ENCODE measurements at regions of chr10 and their contacts with region 1.

Region 1: GRCh38 chr10:69087590-69088470 is at the start of gene SRGN:
- DNase-seq: peak; percentile 75 to 94
- ATAC-seq: peak; percentile 41 to 71 (median 61)
- H3K4me3 ChIP-seq: peak within 1 kb of the TSS; percentile 53
- H3K4me3 Mint-ChIP-seq: peak within 1 kb of the TSS; percentile 89
- H3K27ac ChIP-seq: peak within 1 kb of the TSS; percentile 100
- H3K27ac Mint-ChIP-seq: peak within 1 kb of the TSS; percentile 96
- H3K4me1 ChIP-seq: peaks cover 38% of the 10 kb centered on the region
- H3K4me1 Mint-ChIP-seq: peaks cover 57 to 65% of the 10 kb centered on the region in 2 donors
- H3K27me3 ChIP-seq: no peaks in the 10 kb centered on the region
- H3K27me3 Mint-ChIP-seq: no peaks in the 10 kb centered on the region
- CTCF ChIP-seq: no peak
- total RNA-seq, gene SRGN: 636 to 954 (median 778) TPM

Region 2: DNA sequence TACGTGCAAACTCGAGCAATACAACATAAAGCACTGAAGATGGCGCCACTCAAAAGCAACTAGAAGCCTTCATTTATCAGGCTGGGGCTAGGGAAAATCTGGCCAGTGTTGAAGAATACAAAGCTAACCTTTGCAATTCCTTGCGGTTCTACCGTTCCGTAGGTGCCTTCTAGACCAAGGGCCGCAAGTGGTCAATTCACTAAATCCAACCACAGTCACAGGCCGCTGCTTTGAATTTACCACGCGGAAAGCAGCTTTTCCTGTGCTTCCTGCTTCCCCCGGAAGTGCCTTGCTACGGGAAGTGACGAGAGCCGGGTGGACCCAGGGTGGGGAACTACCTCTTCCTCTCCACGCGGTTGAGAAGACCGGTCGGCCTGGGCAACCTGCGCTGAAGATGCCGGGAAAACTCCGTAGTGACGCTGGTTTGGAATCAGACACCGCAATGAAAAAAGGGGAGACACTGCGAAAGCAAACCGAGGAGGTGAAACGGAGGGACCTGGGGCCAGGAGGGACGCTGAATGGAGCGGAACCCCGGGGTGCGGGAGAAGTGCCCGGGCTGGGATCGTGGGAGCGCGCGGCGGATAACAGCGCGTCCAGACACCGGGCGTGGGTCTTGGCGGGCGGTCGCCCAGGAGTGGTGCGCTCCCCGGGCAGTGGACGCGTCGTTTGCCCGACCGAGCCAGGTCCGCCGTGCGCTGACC is 131.8 kb before region 1 on chr10 and contains the start of gene DDX21:
- intact Hi-C with region 1: loop called (anchors 2 kb)
- DNase-seq: peak; percentile 81 to 94
- ATAC-seq: peak; percentile 84 to 93 (median 87)
- H3K4me3 ChIP-seq: peak within 1 kb of the TSS; percentile 72
- H3K4me3 Mint-ChIP-seq: peak within 1 kb of the TSS; percentile 99
- H3K27ac ChIP-seq: peak within 1 kb of the TSS; percentile 86
- H3K27ac Mint-ChIP-seq: peak within 1 kb of the TSS; percentile 99
- H3K4me1 ChIP-seq: peaks cover 25% of the 10 kb centered on the region
- H3K4me1 Mint-ChIP-seq: peaks cover 31 to 38% of the 10 kb centered on the region in 2 donors
- H3K27me3 ChIP-seq: no peaks in the 10 kb centered on the region
- H3K27me3 Mint-ChIP-seq: no peaks in the 10 kb centered on the region
- CTCF ChIP-seq: peak; percentile 77
- total RNA-seq, gene DDX21: 59.0 to 62.1 (median 59.8) TPM

Region 3: DNA sequence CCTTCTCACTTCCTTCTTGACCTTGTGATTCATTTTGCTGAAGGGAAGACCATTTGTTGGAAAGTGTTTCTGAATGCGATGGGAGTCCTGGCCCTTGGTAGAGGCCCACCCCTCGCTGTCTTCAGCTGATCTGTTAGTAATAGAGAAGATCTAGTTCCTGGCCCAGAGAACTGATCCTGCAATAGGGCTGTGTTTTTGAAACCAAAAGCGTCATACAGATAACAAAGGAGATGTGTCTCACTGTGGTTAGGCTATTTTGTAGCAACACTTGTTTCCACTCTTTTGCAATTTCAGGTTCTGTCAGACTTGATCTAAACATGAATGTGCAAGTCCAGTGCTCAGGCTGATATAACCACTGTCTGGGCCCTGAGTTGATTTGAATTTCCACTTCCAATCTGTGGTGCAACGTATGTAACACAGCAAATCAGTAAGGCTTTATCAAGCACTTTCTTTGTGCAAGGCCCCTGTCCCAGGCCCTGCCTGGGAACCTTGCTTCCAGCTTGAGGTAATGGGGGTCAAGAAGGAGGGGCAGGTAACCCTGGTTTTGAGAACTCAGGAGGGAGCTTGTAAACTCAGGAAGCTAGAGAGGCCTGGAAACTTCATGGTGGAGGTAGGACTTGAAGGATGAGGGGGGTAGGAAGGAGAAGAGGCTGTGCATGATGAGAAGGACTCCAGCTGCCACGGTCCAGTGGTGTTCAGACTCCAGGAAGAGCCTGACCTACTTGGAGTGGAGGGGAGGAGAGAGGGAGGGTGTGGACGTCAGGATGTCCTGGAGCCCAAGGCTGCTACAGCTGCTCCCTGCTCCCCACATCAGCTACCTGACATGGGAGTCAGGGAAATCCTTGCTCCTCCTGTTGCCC is 42.2 kb before region 1 on chr10:
- intact Hi-C with region 1: loop called (anchors 1 kb)
- DNase-seq: peak; percentile 37 to 70
- ATAC-seq: peak; percentile 70 to 89 (median 84)
- H3K4me3 ChIP-seq: no peak overlapping the region
- H3K4me3 Mint-ChIP-seq: peak overlapping the region; percentile 87
- H3K27ac ChIP-seq: peak overlapping the region; percentile 88
- H3K27ac Mint-ChIP-seq: peak overlapping the region; percentile 95 to 99
- H3K4me1 ChIP-seq: peaks cover 66% of the 10 kb centered on the region
- H3K4me1 Mint-ChIP-seq: peaks cover 52 to 63% of the 10 kb centered on the region in 2 donors
- H3K27me3 ChIP-seq: no peaks in the 10 kb centered on the region
- H3K27me3 Mint-ChIP-seq: no peaks in the 10 kb centered on the region
- CTCF ChIP-seq: no peak

Region 4: DNA sequence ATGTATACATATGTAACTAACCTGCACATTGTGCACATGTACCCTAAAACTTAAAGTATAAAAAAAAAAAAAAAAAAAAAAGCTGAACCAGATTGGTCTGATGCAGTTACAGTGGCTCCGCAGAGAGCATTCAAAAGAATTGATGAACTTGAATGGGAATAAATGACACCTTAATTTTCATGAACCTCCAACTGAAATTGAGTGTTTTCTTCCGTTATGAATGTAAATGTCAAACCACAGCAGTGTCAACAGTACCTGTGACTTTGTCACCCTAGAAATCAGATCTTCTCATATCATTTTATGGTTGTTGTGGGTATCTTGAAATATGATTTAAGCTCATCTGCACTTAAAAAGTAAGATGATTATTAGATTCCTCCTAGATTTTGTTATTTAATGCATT is 32.6 kb before region 1 on chr10:
- intact Hi-C with region 1: loop called (anchors 1 kb)
- DNase-seq: peak in 1 of 2 donors; percentile 40
- ATAC-seq: peak; percentile 39 to 49 (median 40)
- H3K4me3 ChIP-seq: no peak overlapping the region
- H3K4me3 Mint-ChIP-seq: peak overlapping the region; percentile 78
- H3K27ac ChIP-seq: peak overlapping the region; percentile 72
- H3K27ac Mint-ChIP-seq: peak overlapping the region; percentile 85 to 93
- H3K4me1 ChIP-seq: peaks cover 78% of the 10 kb centered on the region
- H3K4me1 Mint-ChIP-seq: peaks cover 49 to 61% of the 10 kb centered on the region in 2 donors
- H3K27me3 ChIP-seq: no peaks in the 10 kb centered on the region
- H3K27me3 Mint-ChIP-seq: no peaks in the 10 kb centered on the region
- CTCF ChIP-seq: no peak

Region 5: GRCh38 chr10:69069090-69070042 is 18.5 kb before region 1 on chr10:
- intact Hi-C with region 1: no loop called
- DNase-seq: no peak
- ATAC-seq: no peak
- H3K4me3 ChIP-seq: no peak overlapping the region
- H3K4me3 Mint-ChIP-seq: no peak overlapping the region
- H3K27ac ChIP-seq: no peak overlapping the region
- H3K27ac Mint-ChIP-seq: no peak overlapping the region
- H3K4me1 ChIP-seq: peaks cover 29% of the 10 kb centered on the region
- H3K4me1 Mint-ChIP-seq: peaks cover 15 to 24% of the 10 kb centered on the region in 2 donors
- H3K27me3 ChIP-seq: no peaks in the 10 kb centered on the region
- H3K27me3 Mint-ChIP-seq: no peaks in the 10 kb centered on the region
- CTCF ChIP-seq: no peak

Region 6: DNA sequence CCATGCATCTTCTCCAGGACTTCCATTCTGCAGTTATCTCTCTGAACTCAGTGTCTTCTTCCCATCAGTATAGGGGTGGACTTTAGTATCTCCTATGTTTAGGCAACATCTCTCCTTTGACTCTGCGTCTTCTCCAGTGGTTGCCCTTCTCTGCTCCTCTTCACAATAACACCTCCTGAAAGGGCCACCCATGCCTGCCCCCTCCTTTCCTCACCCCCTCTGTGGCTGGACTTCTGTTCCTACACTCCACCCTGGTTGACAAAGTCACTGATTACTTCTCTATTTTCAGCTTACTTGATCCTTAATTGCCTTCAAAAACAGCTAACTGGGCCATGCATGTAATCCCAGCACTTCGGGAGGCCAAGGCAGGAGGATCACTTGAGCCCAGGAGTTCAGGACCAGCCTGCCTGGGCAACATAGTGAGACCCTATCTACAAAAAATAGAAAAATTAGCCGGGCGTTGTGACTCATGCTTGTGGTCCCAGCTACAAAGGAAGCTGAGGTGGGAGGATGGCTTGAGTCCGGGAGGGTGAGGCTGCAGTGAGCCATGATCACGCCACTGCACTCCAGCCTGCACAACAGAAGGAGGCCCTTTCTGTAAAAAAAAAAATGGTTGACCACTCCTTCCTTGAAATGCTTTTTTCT is 13.7 kb after region 1 on chr10:
- intact Hi-C with region 1: loop called (anchors 1 kb)
- DNase-seq: peak; percentile 49 to 55
- ATAC-seq: peak; percentile 63 to 70 (median 69)
- H3K4me3 ChIP-seq: no peak overlapping the region
- H3K4me3 Mint-ChIP-seq: peak overlapping the region; percentile 85
- H3K27ac ChIP-seq: peak overlapping the region; percentile 77
- H3K27ac Mint-ChIP-seq: peak overlapping the region; percentile 95 to 96
- H3K4me1 ChIP-seq: peaks cover 55% of the 10 kb centered on the region
- H3K4me1 Mint-ChIP-seq: peaks cover 62 to 71% of the 10 kb centered on the region in 2 donors
- H3K27me3 ChIP-seq: no peaks in the 10 kb centered on the region
- H3K27me3 Mint-ChIP-seq: no peaks in the 10 kb centered on the region
- CTCF ChIP-seq: no peak

Region 7: DNA sequence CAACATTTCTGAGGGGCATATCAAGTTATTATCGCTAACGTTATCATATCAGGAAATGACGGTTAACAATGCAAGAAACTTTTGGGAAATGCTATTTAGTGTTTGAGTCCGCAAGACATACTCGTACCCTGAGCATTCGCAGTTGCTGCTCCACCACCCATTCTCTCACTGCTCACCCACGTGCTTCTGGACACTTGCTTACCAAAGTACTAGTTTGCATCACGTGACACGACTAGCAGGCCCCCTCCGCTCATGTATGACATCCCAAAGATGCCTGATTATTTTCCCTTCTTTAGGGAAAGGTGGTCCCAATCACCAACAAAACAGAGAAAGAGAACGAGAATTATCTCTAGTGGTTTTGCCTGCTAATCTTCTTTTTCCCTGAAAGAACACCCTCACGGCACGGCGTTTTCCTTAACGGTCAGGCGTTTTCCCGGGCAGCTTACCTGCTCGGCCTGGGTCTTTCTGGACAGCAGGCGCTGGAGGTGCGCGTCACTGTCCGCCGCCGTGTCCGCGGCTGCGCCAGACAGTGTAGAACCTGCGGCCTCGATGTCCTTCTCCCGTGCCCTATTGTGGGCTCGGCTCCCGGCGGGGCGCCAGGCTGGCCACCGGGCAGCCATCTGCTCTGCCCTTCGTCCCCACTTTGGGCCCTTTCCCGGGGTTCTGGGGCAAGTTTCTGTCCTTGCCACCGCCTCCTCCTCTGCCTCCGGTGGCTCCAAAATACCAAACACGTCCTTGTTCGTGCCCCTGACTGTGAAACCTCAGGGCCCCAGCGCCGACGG is 92.1 kb after region 1 on chr10 and contains the start of gene SUPV3L1:
- intact Hi-C with region 1: loop called (anchors 1 kb)
- DNase-seq: peak; percentile 90 to 95
- ATAC-seq: peak; percentile 75 to 89 (median 81)
- H3K4me3 ChIP-seq: peak within 1 kb of the TSS; percentile 86
- H3K4me3 Mint-ChIP-seq: peak within 1 kb of the TSS; percentile 95
- H3K27ac ChIP-seq: peak within 1 kb of the TSS; percentile 92
- H3K27ac Mint-ChIP-seq: peak within 1 kb of the TSS; percentile 98 to 99
- H3K4me1 ChIP-seq: peaks cover 19% of the 10 kb centered on the region
- H3K4me1 Mint-ChIP-seq: peaks cover 44 to 58% of the 10 kb centered on the region in 2 donors
- H3K27me3 ChIP-seq: no peaks in the 10 kb centered on the region
- H3K27me3 Mint-ChIP-seq: no peaks in the 10 kb centered on the region
- CTCF ChIP-seq: no peak
- total RNA-seq, gene SUPV3L1: 56.6 to 104 (median 67.1) TPM